ENCODE measurements at regions of chr9 and their contacts with region 1.

Region 1: GRCh38 chr9:35646533-35647265 is 4.0 kb downstream of the SIT1 start:
- DNase-seq: peak; percentile 89 to 92 (median 89)
- ATAC-seq: peak; percentile 97
- H3K4me3 ChIP-seq: peak overlapping the region; percentile 49
- H3K27ac ChIP-seq: peak overlapping the region; percentile 64
- H3K4me1 ChIP-seq: peaks cover 31 to 32% of the 10 kb centered on the region in 2 experiments
- H3K27me3 ChIP-seq: no peaks in the 10 kb centered on the region
- CTCF ChIP-seq: peak; percentile 84 to 89 (median 87)
- EP300 ChIP-seq: no peak
- POLR2A ChIP-seq: peak; percentile 57
- RAD21 ChIP-seq: peak; percentile 57 to 77

Region 2: GRCh38 chr9:34686231-34686630 is 960.5 kb before region 1 on chr9:
- CTCF ChIA-PET with region 1: no interaction called
- POLR2A ChIA-PET with region 1: no interaction called
- in situ Hi-C with region 1: no loop called
- intact Hi-C with region 1: no loop called
- DNase-seq: no peak
- ATAC-seq: no peak
- H3K4me3 ChIP-seq: no peak overlapping the region
- H3K27ac ChIP-seq: no peak overlapping the region
- H3K4me1 ChIP-seq: no peaks in the 10 kb centered on the region
- H3K27me3 ChIP-seq: no peaks in the 10 kb centered on the region
- CTCF ChIP-seq: no peak
- EP300 ChIP-seq: no peak
- POLR2A ChIP-seq: no peak
- RAD21 ChIP-seq: no peak

Region 3: GRCh38 chr9:35603987-35604577 is 42.6 kb before region 1 on chr9:
- CTCF ChIA-PET with region 1: no interaction called
- POLR2A ChIA-PET with region 1: interaction called, 4 read pairs
- in situ Hi-C with region 1: loop called (anchors 5 kb)
- intact Hi-C with region 1: no loop called
- DNase-seq: peak; percentile 94 to 98 (median 96)
- ATAC-seq: peak; percentile 98
- H3K4me3 ChIP-seq: peak overlapping the region; percentile 54
- H3K27ac ChIP-seq: peak overlapping the region; percentile 87
- H3K4me1 ChIP-seq: peaks cover 2 to 29% of the 10 kb centered on the region in 2 experiments; a peak in 3 of 5 replicates
- H3K27me3 ChIP-seq: no peaks in the 10 kb centered on the region
- CTCF ChIP-seq: peak; percentile 77 to 95 (median 81)
- EP300 ChIP-seq: no peak
- POLR2A ChIP-seq: peak; percentile 71; the same call in 1 of the 2 replicates
- RAD21 ChIP-seq: peak; percentile 15 to 57

Region 4: GRCh38 chr9:35657546-35658136 is 10.9 kb after region 1 on chr9 and contains the start of gene RMRP:
- CTCF ChIA-PET with region 1: no interaction called
- POLR2A ChIA-PET with region 1: interaction called, 14 read pairs
- in situ Hi-C with region 1: no loop called
- intact Hi-C with region 1: no loop called
- DNase-seq: peak; percentile 80 to 98 (median 86)
- ATAC-seq: peak; percentile 96
- H3K4me3 ChIP-seq: peak within 1 kb of the TSS; percentile 89
- H3K27ac ChIP-seq: peak within 1 kb of the TSS; percentile 98
- H3K4me1 ChIP-seq: peaks cover 14 to 26% of the 10 kb centered on the region in 2 experiments; a peak in 4 of 5 replicates
- H3K27me3 ChIP-seq: no peaks in the 10 kb centered on the region
- CTCF ChIP-seq: peak; percentile 19 to 35 (median 25); a peak in 2 of 6 replicates
- EP300 ChIP-seq: peak; percentile 42; the same call in 1 of the 2 replicates
- POLR2A ChIP-seq: no peak; the same call in 1 of the 2 replicates
- RAD21 ChIP-seq: no peak; a peak in 1 of 4 replicates
- polyA plus RNA-seq, gene RMRP: not detected

Region 5: DNA sequence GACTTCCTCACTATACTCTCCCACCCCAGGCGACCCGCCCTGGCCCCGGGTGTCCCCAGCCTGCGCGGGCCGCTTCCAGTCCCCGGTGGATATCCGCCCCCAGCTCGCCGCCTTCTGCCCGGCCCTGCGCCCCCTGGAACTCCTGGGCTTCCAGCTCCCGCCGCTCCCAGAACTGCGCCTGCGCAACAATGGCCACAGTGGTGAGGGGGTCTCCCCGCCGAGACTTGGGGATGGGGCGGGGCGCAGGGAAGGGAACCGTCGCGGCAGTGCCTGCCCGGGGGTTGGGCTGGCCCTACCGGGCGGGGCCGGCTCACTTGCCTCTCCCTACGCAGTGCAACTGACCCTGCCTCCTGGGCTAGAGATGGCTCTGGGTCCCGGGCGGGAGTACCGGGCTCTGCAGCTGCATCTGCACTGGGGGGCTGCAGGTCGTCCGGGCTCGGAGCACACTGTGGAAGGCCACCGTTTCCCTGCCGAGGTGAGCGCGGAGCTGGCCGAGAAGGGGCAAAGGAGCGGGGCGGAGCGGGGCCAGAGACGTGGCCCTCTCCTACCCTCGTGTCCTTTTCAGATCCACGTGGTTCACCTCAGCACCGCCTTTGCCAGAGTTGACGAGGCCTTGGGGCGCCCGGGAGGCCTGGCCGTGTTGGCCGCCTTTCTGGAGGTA is 29.2 kb after region 1 on chr9:
- CTCF ChIA-PET with region 1: no interaction called
- POLR2A ChIA-PET with region 1: no interaction called
- in situ Hi-C with region 1: no loop called
- intact Hi-C with region 1: no loop called
- DNase-seq: no peak
- ATAC-seq: no peak
- H3K4me3 ChIP-seq: no peak overlapping the region
- H3K27ac ChIP-seq: no peak overlapping the region
- H3K4me1 ChIP-seq: peaks cover 0 to 15% of the 10 kb centered on the region in 2 experiments; a peak in 4 of 5 replicates
- H3K27me3 ChIP-seq: no peaks in the 10 kb centered on the region
- CTCF ChIP-seq: no peak
- EP300 ChIP-seq: no peak
- POLR2A ChIP-seq: no peak
- RAD21 ChIP-seq: no peak

Region 6: GRCh38 chr9:35861161-35861897 is 214.6 kb after region 1 on chr9:
- CTCF ChIA-PET with region 1: no interaction called
- POLR2A ChIA-PET with region 1: no interaction called
- in situ Hi-C with region 1: no loop called
- intact Hi-C with region 1: no loop called
- DNase-seq: no peak
- ATAC-seq: no peak
- H3K4me3 ChIP-seq: no peak overlapping the region
- H3K27ac ChIP-seq: no peak overlapping the region
- H3K4me1 ChIP-seq: no peaks in the 10 kb centered on the region
- H3K27me3 ChIP-seq: peaks cover 14 to 73% of the 10 kb centered on the region in 2 experiments
- CTCF ChIP-seq: no peak
- EP300 ChIP-seq: no peak
- POLR2A ChIP-seq: no peak
- RAD21 ChIP-seq: no peak

Region 7: DNA sequence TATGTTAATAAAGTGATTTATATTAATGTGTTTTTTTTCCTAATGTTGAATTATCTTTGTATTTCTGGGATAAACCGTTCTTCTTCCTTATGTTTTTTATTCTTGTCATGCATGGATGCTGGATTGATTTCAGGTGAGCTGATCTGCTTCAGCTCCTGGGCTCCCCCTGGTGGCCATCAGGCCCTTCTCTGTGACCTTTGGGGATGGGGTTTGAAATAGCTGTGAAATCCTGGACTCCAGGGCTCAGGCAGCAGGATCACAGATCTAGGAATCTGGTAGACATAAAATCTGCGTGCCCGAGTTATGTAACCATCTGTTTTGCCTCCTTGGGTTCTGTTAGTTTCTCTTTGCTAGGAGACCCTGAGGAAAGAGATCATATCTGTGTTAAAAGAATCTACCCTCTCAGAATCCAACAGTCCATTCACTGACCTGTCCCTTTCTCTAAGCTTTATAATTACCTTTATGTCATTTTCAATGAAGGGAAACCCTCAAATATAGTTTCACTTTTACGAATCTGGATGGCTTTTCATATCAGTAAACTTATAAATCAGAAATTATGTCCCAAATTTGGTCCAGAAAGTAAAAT is 235.7 kb after region 1 on chr9:
- CTCF ChIA-PET with region 1: no interaction called
- POLR2A ChIA-PET with region 1: interaction called, 3 read pairs
- in situ Hi-C with region 1: no loop called
- intact Hi-C with region 1: loop called (anchors 5 kb)
- DNase-seq: peak; percentile 64 to 75 (median 68)
- ATAC-seq: peak; percentile 85
- H3K4me3 ChIP-seq: no peak overlapping the region
- H3K27ac ChIP-seq: no peak overlapping the region
- H3K4me1 ChIP-seq: no peaks in the 10 kb centered on the region
- H3K27me3 ChIP-seq: no peaks in the 10 kb centered on the region
- CTCF ChIP-seq: peak; percentile 81 to 88 (median 85)
- EP300 ChIP-seq: no peak
- POLR2A ChIP-seq: no peak
- RAD21 ChIP-seq: peak; percentile 66 to 82

Region 8: GRCh38 chr9:35923927-35924763 is 277.4 kb after region 1 on chr9:
- CTCF ChIA-PET with region 1: no interaction called
- POLR2A ChIA-PET with region 1: no interaction called
- in situ Hi-C with region 1: no loop called
- intact Hi-C with region 1: no loop called
- DNase-seq: peak; percentile 58 to 86 (median 68)
- ATAC-seq: peak; percentile 93
- H3K4me3 ChIP-seq: peak overlapping the region; percentile 13; the same call in 1 of the 2 replicates
- H3K27ac ChIP-seq: peak overlapping the region; percentile 99
- H3K4me1 ChIP-seq: peaks cover 18 to 42% of the 10 kb centered on the region in 2 experiments
- H3K27me3 ChIP-seq: no peaks in the 10 kb centered on the region
- CTCF ChIP-seq: no peak
- EP300 ChIP-seq: peak; percentile 86
- POLR2A ChIP-seq: peak; percentile 34
- RAD21 ChIP-seq: no peak

Measured in K562 (cell line).